Activated CD4-positive, alpha-beta memory T cell treated with anti-CD3 and anti-CD28 coated beads for 36 hours (primary cell): ENCODE measurements at regions of chr6 and their contacts with region 1.

Region 1: DNA sequence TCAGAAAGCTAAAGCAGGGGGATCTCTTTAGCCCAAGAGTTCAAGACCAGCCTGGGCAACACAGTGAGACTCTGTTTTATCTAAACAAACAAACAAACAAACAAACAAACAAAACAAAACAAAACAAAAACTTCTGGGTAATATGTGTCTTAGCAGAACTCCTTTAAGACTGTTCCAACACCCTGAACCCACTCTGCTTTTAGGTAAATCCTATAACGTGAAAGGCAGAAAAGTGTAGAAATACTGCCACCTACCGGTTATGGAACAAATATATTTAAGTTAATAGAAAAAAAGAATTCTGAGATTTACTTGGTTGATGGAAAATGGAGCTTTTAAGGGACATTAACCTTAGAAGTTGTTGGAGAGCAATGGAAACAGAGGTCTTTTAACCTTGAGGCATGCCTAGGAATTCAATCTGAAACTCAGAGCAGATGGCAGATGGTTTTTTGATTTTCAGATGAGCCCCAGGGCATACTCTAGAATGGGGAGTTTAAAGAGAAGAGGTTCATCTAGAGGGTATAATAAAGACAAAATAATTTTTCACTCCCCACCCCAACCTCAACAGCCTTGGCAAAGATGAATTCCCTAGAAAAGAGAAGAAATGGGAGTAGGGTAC is 38.5 kb downstream of the SOD2 start:
- DNase-seq: no peak
- H3K4me3 Mint-ChIP-seq: no peak overlapping the region
- H3K27ac Mint-ChIP-seq: no peak overlapping the region
- H3K4me1 Mint-ChIP-seq: no peaks in the 10 kb centered on the region
- H3K27me3 Mint-ChIP-seq: no peaks in the 10 kb centered on the region

Region 2: GRCh38 chr6:159642481-159642880 is 12.1 kb before region 1 on chr6:
- CTCF ChIA-PET with region 1: interaction called, 13 read pairs
- POLR2A ChIA-PET with region 1: no interaction called
- intact Hi-C with region 1: no loop called
- DNase-seq: no peak
- H3K4me3 Mint-ChIP-seq: no peak overlapping the region
- H3K27ac Mint-ChIP-seq: no peak overlapping the region
- H3K4me1 Mint-ChIP-seq: peaks cover 2% of the 10 kb centered on the region
- H3K27me3 Mint-ChIP-seq: no peaks in the 10 kb centered on the region

Region 3: GRCh38 chr6:159665868-159666635 is 11.5 kb after region 1 on chr6:
- CTCF ChIA-PET with region 1: interaction called, 12 read pairs
- POLR2A ChIA-PET with region 1: no interaction called
- intact Hi-C with region 1: no loop called
- DNase-seq: no peak
- H3K4me3 Mint-ChIP-seq: no peak overlapping the region
- H3K27ac Mint-ChIP-seq: no peak overlapping the region
- H3K4me1 Mint-ChIP-seq: no peaks in the 10 kb centered on the region
- H3K27me3 Mint-ChIP-seq: no peaks in the 10 kb centered on the region

Region 4: DNA sequence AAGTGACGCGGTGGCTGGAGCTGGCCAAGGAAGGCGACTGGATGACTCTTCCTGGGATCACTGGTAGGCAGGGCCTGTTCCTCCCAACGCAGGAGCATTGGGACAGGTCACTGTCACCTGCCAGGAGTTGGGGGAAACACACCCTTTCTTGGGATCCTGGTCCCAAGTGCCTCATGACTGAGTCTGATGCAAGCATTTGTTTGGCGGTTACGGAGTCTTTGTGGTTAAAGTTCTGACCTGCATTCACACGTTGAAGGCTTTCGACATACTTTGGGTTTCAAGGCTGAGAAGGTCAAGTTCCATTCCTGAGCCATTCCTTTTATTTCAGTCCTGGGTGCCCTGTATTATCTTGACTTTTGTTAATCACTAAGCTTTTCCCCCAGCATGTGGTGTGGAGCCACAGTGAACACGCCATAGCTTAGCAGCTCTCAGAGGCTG is 151.4 kb after region 1 on chr6:
- CTCF ChIA-PET with region 1: no interaction called
- POLR2A ChIA-PET with region 1: no interaction called
- intact Hi-C with region 1: no loop called
- DNase-seq: no peak
- H3K4me3 Mint-ChIP-seq: no peak overlapping the region
- H3K27ac Mint-ChIP-seq: no peak overlapping the region
- H3K4me1 Mint-ChIP-seq: no peaks in the 10 kb centered on the region
- H3K27me3 Mint-ChIP-seq: no peaks in the 10 kb centered on the region